Activated CD4-positive, alpha-beta memory T cell treated with anti-CD3 and anti-CD28 coated beads, Interleukin-2, amount 10 ng/mL, durations not matched to agents 7 days and 5 days (primary cell): ENCODE measurements at regions of chr2 and their contacts with region 1.

Region 1: DNA sequence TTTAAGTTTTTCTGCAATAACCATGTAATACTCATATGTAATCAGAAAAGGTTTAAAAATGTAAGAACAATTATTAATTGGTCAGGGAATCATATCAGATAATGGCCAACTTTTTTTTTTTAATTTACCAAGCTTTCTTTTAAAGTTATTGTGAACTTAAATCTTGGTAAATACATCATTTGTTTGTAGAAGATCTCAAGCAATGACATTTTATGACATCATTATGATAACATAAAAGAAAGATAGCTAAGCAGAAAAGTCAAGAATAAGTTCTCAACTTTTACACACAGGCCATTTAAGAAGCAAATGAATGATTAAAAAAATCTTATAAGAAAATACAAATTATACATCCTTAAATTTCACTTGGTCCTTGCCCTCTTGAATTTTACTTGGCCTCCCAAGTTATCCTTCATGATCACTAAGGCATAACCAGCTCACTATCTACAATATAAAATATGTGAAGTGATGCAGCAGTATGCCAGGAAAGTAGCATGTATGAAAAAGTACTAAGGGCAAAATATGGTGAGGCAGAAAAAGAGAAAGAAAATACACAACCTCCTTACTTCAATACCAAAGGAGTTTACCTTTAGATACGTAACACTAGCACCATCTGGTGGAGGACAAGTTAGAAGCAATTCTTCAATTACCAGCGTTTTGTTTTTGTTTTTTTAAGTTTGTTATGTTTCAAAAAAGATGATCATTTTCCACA is 116.6 kb downstream of the SRBD1 start:
- DNase-seq: no peak
- H3K4me3 Mint-ChIP-seq: no peak overlapping the region
- H3K27ac Mint-ChIP-seq: no peak overlapping the region
- H3K4me1 Mint-ChIP-seq: peaks cover 32% of the 10 kb centered on the region
- H3K27me3 Mint-ChIP-seq: no peaks in the 10 kb centered on the region

Region 2: DNA sequence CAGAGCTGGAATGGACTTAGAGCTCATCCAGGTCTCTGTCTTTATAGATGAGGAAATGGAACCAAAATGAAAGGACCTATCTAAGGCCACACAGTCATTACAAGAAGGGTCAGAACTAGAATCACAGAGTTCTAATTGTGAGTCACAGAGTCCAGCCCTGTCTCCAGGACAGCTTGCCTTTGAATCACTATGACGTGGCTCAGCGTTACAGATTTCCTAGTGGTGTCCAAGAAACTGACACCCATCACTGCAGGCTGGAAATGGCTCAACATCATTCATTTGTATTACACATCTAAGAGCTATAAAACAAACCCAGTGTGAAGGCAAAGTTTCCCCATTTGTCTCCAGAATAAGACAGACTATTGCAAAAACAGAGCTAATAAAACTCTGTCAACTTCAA is 320.9 kb before region 1 on chr2:
- CTCF ChIA-PET with region 1: no interaction called
- POLR2A ChIA-PET with region 1: no interaction called
- DNase-seq: no peak
- H3K4me3 Mint-ChIP-seq: no peak overlapping the region
- H3K27ac Mint-ChIP-seq: no peak overlapping the region
- H3K4me1 Mint-ChIP-seq: peaks cover 2% of the 10 kb centered on the region
- H3K27me3 Mint-ChIP-seq: peaks cover 59% of the 10 kb centered on the region

Region 3: GRCh38 chr2:45505138-45505537 is 10.7 kb after region 1 on chr2:
- CTCF ChIA-PET with region 1: interaction called, 16 read pairs
- POLR2A ChIA-PET with region 1: no interaction called
- DNase-seq: no peak
- H3K4me3 Mint-ChIP-seq: no peak overlapping the region
- H3K27ac Mint-ChIP-seq: no peak overlapping the region
- H3K4me1 Mint-ChIP-seq: no peaks in the 10 kb centered on the region
- H3K27me3 Mint-ChIP-seq: no peaks in the 10 kb centered on the region

Region 4: GRCh38 chr2:45578056-45578809 is 83.8 kb after region 1 on chr2:
- CTCF ChIA-PET with region 1: interaction called, 11 read pairs
- POLR2A ChIA-PET with region 1: no interaction called
- DNase-seq: no peak
- H3K4me3 Mint-ChIP-seq: no peak overlapping the region
- H3K27ac Mint-ChIP-seq: no peak overlapping the region
- H3K4me1 Mint-ChIP-seq: peaks cover 6% of the 10 kb centered on the region
- H3K27me3 Mint-ChIP-seq: no peaks in the 10 kb centered on the region